Natural killer cell (primary cell): ENCODE measurements at regions of chr11 and their contacts with region 1.

Region 1: GRCh38 chr11:108887436-108888238 is 222.8 kb downstream of the DDX10 start:
- DNase-seq: peak; percentile 37 to 44
- ATAC-seq: peak; percentile 75 to 88 (median 85)
- H3K4me3 ChIP-seq: peak overlapping the region; percentile 4
- H3K4me3 Mint-ChIP-seq: peak overlapping the region; percentile 78
- H3K27ac ChIP-seq: peak overlapping the region; percentile 21
- H3K27ac Mint-ChIP-seq: peak overlapping the region; percentile 65 to 76
- H3K4me1 ChIP-seq: peaks cover 3% of the 10 kb centered on the region
- H3K4me1 Mint-ChIP-seq: peaks cover 12 to 13% of the 10 kb centered on the region in 2 donors
- H3K27me3 ChIP-seq: no peaks in the 10 kb centered on the region
- H3K27me3 Mint-ChIP-seq: no peaks in the 10 kb centered on the region
- CTCF ChIP-seq: no peak

Region 2: GRCh38 chr11:108616567-108616966 is 271.1 kb before region 1 on chr11:
- intact Hi-C with region 1: no loop called
- DNase-seq: no peak
- ATAC-seq: no peak
- H3K4me3 ChIP-seq: no peak overlapping the region
- H3K4me3 Mint-ChIP-seq: no peak overlapping the region
- H3K27ac ChIP-seq: no peak overlapping the region
- H3K27ac Mint-ChIP-seq: no peak overlapping the region
- H3K4me1 ChIP-seq: no peaks in the 10 kb centered on the region
- H3K4me1 Mint-ChIP-seq: no peaks in the 10 kb centered on the region
- H3K27me3 ChIP-seq: no peaks in the 10 kb centered on the region
- H3K27me3 Mint-ChIP-seq: peaks cover 13 to 23% of the 10 kb centered on the region in 2 donors
- CTCF ChIP-seq: no peak

Region 3: GRCh38 chr11:108947654-108948570 is 60.3 kb after region 1 on chr11:
- intact Hi-C with region 1: loop called (anchors 2 kb)
- DNase-seq: peak in 1 of 2 donors; percentile 3
- ATAC-seq: peak; percentile 86 to 95 (median 90)
- H3K4me3 ChIP-seq: no peak overlapping the region
- H3K4me3 Mint-ChIP-seq: peak overlapping the region; percentile 59
- H3K27ac ChIP-seq: no peak overlapping the region
- H3K27ac Mint-ChIP-seq: peak overlapping the region; percentile 39 to 57
- H3K4me1 ChIP-seq: peaks cover 3% of the 10 kb centered on the region
- H3K4me1 Mint-ChIP-seq: peaks cover 19 to 23% of the 10 kb centered on the region in 2 donors
- H3K27me3 ChIP-seq: no peaks in the 10 kb centered on the region
- H3K27me3 Mint-ChIP-seq: peaks cover 0 to 9% of the 10 kb centered on the region in 2 donors
- CTCF ChIP-seq: no peak